ENCODE measurements at regions of chr5 and their contacts with region 1.

Region 1: DNA sequence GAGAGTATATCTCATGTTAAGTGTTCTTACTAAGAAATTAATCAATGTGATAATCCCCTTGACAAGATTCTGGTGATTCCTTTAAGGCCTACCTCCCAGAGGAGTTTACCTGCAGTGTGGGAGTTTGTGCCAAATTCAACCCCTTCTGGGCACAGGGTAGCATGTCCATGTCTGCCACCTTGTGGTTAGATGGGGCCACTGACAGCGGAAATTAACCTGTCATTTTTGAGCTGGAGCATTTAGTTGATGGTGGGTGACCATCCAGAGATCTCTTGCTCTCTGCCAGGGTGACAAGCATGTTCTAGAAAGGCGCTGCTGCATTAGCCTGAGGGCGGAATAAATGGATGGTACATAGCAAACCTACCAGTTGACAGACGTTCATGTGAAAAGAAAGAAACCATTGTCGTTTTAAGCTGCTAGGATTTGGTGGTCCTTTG is 132.2 kb downstream of the FBXO4 start:
- DNase-seq: peak; percentile 68
- ATAC-seq: peak; percentile 78
- H3K4me3 ChIP-seq: no peak overlapping the region
- H3K4me3 Mint-ChIP-seq: no peak overlapping the region
- H3K27ac ChIP-seq: no peak overlapping the region
- H3K27ac Mint-ChIP-seq: no peak overlapping the region
- H3K4me1 ChIP-seq: no peaks in the 10 kb centered on the region
- H3K4me1 Mint-ChIP-seq: no peaks in the 10 kb centered on the region
- H3K27me3 ChIP-seq: no peaks in the 10 kb centered on the region
- H3K27me3 Mint-ChIP-seq: peaks cover 15% of the 10 kb centered on the region
- CTCF ChIP-seq: peak; percentile 84

Region 2: DNA sequence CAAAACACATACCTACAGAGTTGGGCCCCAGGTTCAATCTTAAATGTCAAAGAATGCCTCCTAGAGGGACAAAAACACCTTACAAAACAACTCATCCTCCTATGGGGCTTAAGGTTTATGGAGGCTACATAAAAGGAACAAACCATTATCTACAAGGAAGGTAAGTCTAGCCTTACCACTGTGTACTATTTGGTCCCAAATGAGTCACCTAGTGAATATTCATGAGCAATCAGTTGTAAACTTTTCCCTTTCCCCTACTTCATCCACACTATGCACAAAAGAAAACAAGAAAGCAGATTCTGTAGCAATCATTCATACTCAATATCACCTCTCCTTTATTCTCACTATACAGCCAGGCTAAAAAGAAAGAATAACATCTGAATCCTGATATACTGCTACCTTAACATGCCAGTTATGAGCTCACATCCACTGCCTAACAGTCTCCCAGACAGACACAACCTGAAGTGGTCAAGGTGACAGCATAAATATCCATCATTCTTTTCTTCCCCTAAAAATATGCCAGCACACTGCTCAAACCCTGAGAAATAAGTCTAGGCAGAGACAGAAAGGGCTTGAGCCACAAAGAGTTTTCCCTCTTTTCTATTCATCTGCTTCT is 193.3 kb before region 1 on chr5:
- CTCF ChIA-PET with region 1: interaction called, 316 read pairs
- POLR2A ChIA-PET with region 1: no interaction called
- intact Hi-C with region 1: no loop called
- DNase-seq: no peak
- ATAC-seq: no peak
- H3K4me3 ChIP-seq: no peak overlapping the region
- H3K4me3 Mint-ChIP-seq: no peak overlapping the region
- H3K27ac ChIP-seq: peak overlapping the region in 1 of 2 donors; percentile 47
- H3K27ac Mint-ChIP-seq: peak overlapping the region; percentile 12
- H3K4me1 ChIP-seq: peaks cover 3 to 4% of the 10 kb centered on the region in 2 donors
- H3K4me1 Mint-ChIP-seq: peaks cover 35% of the 10 kb centered on the region
- H3K27me3 ChIP-seq: no peaks in the 10 kb centered on the region
- H3K27me3 Mint-ChIP-seq: no peaks in the 10 kb centered on the region
- CTCF ChIP-seq: no peak

Region 3: DNA sequence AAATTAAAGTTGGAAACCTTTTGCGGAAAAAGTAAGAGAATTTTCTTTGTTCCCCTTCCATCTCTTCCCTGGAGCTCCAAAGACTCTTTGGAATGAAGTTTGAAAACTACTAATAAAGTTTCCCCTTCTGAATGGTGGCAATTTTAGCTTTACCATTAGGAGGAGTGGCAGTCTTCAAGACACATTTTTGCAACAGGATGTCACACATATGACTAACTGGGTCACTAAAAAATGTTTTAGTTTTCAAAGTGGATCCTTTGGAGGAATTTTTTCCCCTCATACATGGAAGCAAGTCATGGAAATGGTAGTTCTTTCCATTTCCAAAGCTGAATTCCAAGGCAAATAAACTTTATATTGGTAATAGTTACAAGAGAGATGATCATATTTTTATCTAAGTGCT is 116.6 kb before region 1 on chr5:
- CTCF ChIA-PET with region 1: no interaction called
- POLR2A ChIA-PET with region 1: no interaction called
- intact Hi-C with region 1: no loop called
- DNase-seq: no peak
- ATAC-seq: no peak
- H3K4me3 ChIP-seq: no peak overlapping the region
- H3K4me3 Mint-ChIP-seq: no peak overlapping the region
- H3K27ac ChIP-seq: no peak overlapping the region
- H3K27ac Mint-ChIP-seq: no peak overlapping the region
- H3K4me1 ChIP-seq: no peaks in the 10 kb centered on the region
- H3K4me1 Mint-ChIP-seq: no peaks in the 10 kb centered on the region
- H3K27me3 ChIP-seq: no peaks in the 10 kb centered on the region
- H3K27me3 Mint-ChIP-seq: no peaks in the 10 kb centered on the region
- CTCF ChIP-seq: no peak

Region 4: GRCh38 chr5:42005561-42006153 is 51.6 kb before region 1 on chr5:
- CTCF ChIA-PET with region 1: interaction called, 3 read pairs
- POLR2A ChIA-PET with region 1: no interaction called
- intact Hi-C with region 1: loop called (anchors 5 kb)
- DNase-seq: peak; percentile 22
- ATAC-seq: no peak
- H3K4me3 ChIP-seq: no peak overlapping the region
- H3K4me3 Mint-ChIP-seq: no peak overlapping the region
- H3K27ac ChIP-seq: no peak overlapping the region
- H3K27ac Mint-ChIP-seq: no peak overlapping the region
- H3K4me1 ChIP-seq: no peaks in the 10 kb centered on the region
- H3K4me1 Mint-ChIP-seq: no peaks in the 10 kb centered on the region
- H3K27me3 ChIP-seq: no peaks in the 10 kb centered on the region
- H3K27me3 Mint-ChIP-seq: peaks cover 3% of the 10 kb centered on the region
- CTCF ChIP-seq: peak; percentile 90

Region 5: DNA sequence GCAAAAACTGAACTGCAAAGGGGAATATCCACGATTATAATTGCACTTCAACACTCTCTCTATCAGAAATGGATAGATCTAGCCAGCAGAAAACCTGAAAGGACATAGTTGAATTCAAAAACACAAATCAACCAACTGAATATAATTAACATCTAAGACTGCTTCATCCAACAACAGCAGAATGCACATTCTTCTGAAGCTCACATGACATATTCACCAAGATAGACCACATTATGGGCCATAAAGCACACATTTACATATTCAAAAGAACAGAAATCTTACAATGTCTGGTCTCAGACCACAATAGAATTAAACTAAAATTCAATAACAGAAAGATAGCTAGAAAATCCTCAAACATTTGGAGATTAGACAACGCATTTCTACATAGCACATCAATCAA is 13.9 kb before region 1 on chr5:
- CTCF ChIA-PET with region 1: interaction called, 15 read pairs
- POLR2A ChIA-PET with region 1: no interaction called
- intact Hi-C with region 1: no loop called
- DNase-seq: no peak
- ATAC-seq: no peak
- H3K4me3 ChIP-seq: no peak overlapping the region
- H3K4me3 Mint-ChIP-seq: no peak overlapping the region
- H3K27ac ChIP-seq: no peak overlapping the region
- H3K27ac Mint-ChIP-seq: no peak overlapping the region
- H3K4me1 ChIP-seq: no peaks in the 10 kb centered on the region
- H3K4me1 Mint-ChIP-seq: no peaks in the 10 kb centered on the region
- H3K27me3 ChIP-seq: peaks cover 0 to 12% (median 0%) of the 10 kb centered on the region in 4 experiments
- H3K27me3 Mint-ChIP-seq: peaks cover 27% of the 10 kb centered on the region
- CTCF ChIP-seq: no peak

Region 6: DNA sequence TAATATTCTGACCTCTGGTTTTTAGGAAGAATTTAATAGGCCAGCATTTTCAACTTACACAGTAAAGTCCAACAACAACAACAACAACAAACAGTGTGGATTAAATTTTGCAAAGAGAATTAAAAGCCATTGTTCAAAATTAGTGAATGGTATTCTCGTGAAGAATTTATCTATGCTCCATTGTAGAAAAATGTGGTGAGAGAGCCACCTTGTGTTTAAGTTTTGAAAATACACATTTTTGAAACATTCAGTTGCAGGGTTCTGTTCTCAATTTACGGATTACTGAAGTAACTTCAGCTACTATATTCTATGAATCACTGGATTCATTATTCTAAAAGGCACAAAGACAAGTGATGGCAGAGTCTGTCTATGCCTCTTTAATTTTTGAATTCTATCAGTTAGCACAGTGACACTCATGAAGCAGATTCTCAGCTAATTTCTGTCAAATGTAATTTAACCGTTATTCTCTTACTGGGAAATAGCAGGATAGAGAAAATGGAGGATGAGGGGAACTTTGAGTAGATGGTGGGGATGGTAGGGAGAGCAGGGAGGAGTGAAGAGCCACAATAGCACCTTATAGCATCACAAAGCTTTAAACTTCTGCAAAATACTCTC is 710.3 kb after region 1 on chr5:
- CTCF ChIA-PET with region 1: interaction called, 6 read pairs
- POLR2A ChIA-PET with region 1: no interaction called
- intact Hi-C with region 1: loop called (anchors 5 kb)
- DNase-seq: peak; percentile 41
- ATAC-seq: no peak
- H3K4me3 ChIP-seq: no peak overlapping the region
- H3K4me3 Mint-ChIP-seq: no peak overlapping the region
- H3K27ac ChIP-seq: no peak overlapping the region
- H3K27ac Mint-ChIP-seq: no peak overlapping the region
- H3K4me1 ChIP-seq: no peaks in the 10 kb centered on the region
- H3K4me1 Mint-ChIP-seq: no peaks in the 10 kb centered on the region
- H3K27me3 ChIP-seq: no peaks in the 10 kb centered on the region
- H3K27me3 Mint-ChIP-seq: peaks cover 15% of the 10 kb centered on the region
- CTCF ChIP-seq: peak; percentile 69

Region 7: GRCh38 chr5:42889311-42889933 is 832.1 kb after region 1 on chr5:
- CTCF ChIA-PET with region 1: interaction called, 10 read pairs
- POLR2A ChIA-PET with region 1: no interaction called
- intact Hi-C with region 1: no loop called
- DNase-seq: peak; percentile 68
- ATAC-seq: peak; percentile 64
- H3K4me3 ChIP-seq: no peak overlapping the region
- H3K4me3 Mint-ChIP-seq: no peak overlapping the region
- H3K27ac ChIP-seq: no peak overlapping the region
- H3K27ac Mint-ChIP-seq: no peak overlapping the region
- H3K4me1 ChIP-seq: no peaks in the 10 kb centered on the region
- H3K4me1 Mint-ChIP-seq: no peaks in the 10 kb centered on the region
- H3K27me3 ChIP-seq: no peaks in the 10 kb centered on the region
- H3K27me3 Mint-ChIP-seq: peaks cover 22% of the 10 kb centered on the region
- CTCF ChIP-seq: peak; percentile 94